Activated CD4-positive, alpha-beta memory T cell treated with anti-CD3 and anti-CD28 coated beads for 36 hours (primary cell): ENCODE measurements at regions of chr10 and their contacts with region 1.

Region 1: GRCh38 chr10:95236068-95236903 is 42.2 kb downstream of the ACSM6 start:
- DNase-seq: peak; percentile 38
- H3K4me3 Mint-ChIP-seq: peak overlapping the region; percentile 16
- H3K27ac Mint-ChIP-seq: peak overlapping the region; percentile 88
- H3K4me1 Mint-ChIP-seq: peaks cover 27% of the 10 kb centered on the region
- H3K27me3 Mint-ChIP-seq: peaks cover 12% of the 10 kb centered on the region

Region 2: GRCh38 chr10:94292434-94293090 is 943.7 kb before region 1 on chr10:
- CTCF ChIA-PET with region 1: no interaction called
- POLR2A ChIA-PET with region 1: no interaction called
- intact Hi-C with region 1: no loop called
- DNase-seq: no peak
- H3K4me3 Mint-ChIP-seq: no peak overlapping the region
- H3K27ac Mint-ChIP-seq: no peak overlapping the region
- H3K4me1 Mint-ChIP-seq: no peaks in the 10 kb centered on the region
- H3K27me3 Mint-ChIP-seq: peaks cover 33% of the 10 kb centered on the region

Region 3: GRCh38 chr10:94591461-94592205 is 644.7 kb before region 1 on chr10:
- CTCF ChIA-PET with region 1: no interaction called
- POLR2A ChIA-PET with region 1: no interaction called
- intact Hi-C with region 1: loop called (anchors 1 kb)
- DNase-seq: no peak
- H3K4me3 Mint-ChIP-seq: no peak overlapping the region
- H3K27ac Mint-ChIP-seq: peak overlapping the region; percentile 84
- H3K4me1 Mint-ChIP-seq: peaks cover 23% of the 10 kb centered on the region
- H3K27me3 Mint-ChIP-seq: no peaks in the 10 kb centered on the region

Region 4: GRCh38 chr10:94607111-94607510 is 629.2 kb before region 1 on chr10:
- CTCF ChIA-PET with region 1: no interaction called
- POLR2A ChIA-PET with region 1: no interaction called
- intact Hi-C with region 1: loop called (anchors 5 kb)
- DNase-seq: no peak
- H3K4me3 Mint-ChIP-seq: no peak overlapping the region
- H3K27ac Mint-ChIP-seq: peak overlapping the region; percentile 72
- H3K4me1 Mint-ChIP-seq: peaks cover 23% of the 10 kb centered on the region
- H3K27me3 Mint-ChIP-seq: no peaks in the 10 kb centered on the region

Region 5: GRCh38 chr10:95183271-95184230 is 52.7 kb before region 1 on chr10:
- CTCF ChIA-PET with region 1: interaction called, 11 read pairs
- POLR2A ChIA-PET with region 1: interaction called, 3 read pairs
- intact Hi-C with region 1: no loop called
- DNase-seq: peak; percentile 82
- H3K4me3 Mint-ChIP-seq: peak overlapping the region; percentile 63
- H3K27ac Mint-ChIP-seq: no peak overlapping the region
- H3K4me1 Mint-ChIP-seq: peaks cover 6% of the 10 kb centered on the region
- H3K27me3 Mint-ChIP-seq: peaks cover 25% of the 10 kb centered on the region

Region 6: DNA sequence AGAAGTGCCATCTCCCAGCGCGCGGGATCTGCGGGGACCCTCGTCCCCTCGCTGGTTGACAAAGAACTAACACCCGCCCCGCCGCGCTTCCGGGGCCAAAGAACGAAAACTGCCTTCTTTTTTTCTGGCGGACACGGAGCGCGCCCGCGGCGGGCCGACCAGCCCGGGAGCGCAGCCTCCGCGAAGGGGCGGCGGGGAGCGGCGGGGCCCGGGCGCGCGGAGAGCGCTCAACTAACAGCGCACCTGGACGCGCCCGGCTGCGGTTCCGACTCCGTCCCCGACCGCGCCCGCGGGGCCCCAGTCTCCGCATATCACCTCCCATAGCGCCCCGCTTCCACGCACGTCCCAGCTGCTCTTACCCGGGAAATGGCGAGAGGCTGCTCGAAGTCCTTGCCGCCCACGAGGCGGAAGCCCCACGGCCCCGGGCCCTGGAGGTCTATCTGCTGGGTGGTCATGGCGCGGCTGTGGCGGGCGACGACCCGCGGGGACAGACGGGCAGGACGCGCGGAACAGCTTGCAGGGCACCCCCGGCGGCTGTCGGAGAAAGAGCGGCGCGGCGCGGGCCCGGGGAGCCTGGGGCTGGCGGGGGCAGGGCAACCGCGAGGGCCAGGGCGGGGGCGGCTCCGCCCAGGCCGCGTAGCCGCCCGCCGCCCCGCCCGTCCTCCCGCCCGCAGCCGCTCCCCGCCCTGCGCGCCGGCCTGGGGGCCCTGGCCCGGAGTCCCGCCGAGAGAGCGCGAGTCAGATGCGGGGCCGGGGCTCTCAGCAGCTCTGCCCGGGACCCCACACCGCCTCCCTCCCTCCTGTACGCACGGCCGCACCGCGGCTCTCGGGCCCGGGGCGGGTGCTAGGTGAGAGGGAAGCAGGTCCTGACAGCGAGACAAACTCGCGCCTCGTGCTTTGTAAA is 54.4 kb after region 1 on chr10 and contains the start of gene PDLIM1:
- CTCF ChIA-PET with region 1: no interaction called
- POLR2A ChIA-PET with region 1: no interaction called
- intact Hi-C with region 1: loop called (anchors 5 kb)
- DNase-seq: peak; percentile 42
- H3K4me3 Mint-ChIP-seq: peak within 1 kb of the TSS; percentile 51
- H3K27ac Mint-ChIP-seq: no peak within 1 kb of the TSS
- H3K4me1 Mint-ChIP-seq: peaks cover 14% of the 10 kb centered on the region
- H3K27me3 Mint-ChIP-seq: peaks cover 44% of the 10 kb centered on the region
- total RNA-seq, gene PDLIM1: 0.76 to 0.92 TPM

Region 7: GRCh38 chr10:95384011-95384704 is 147.9 kb after region 1 on chr10:
- CTCF ChIA-PET with region 1: no interaction called
- POLR2A ChIA-PET with region 1: no interaction called
- intact Hi-C with region 1: loop called (anchors 1 kb)
- DNase-seq: peak; percentile 67
- H3K4me3 Mint-ChIP-seq: no peak overlapping the region
- H3K27ac Mint-ChIP-seq: no peak overlapping the region
- H3K4me1 Mint-ChIP-seq: peaks cover 7% of the 10 kb centered on the region
- H3K27me3 Mint-ChIP-seq: peaks cover 2% of the 10 kb centered on the region

Region 8: DNA sequence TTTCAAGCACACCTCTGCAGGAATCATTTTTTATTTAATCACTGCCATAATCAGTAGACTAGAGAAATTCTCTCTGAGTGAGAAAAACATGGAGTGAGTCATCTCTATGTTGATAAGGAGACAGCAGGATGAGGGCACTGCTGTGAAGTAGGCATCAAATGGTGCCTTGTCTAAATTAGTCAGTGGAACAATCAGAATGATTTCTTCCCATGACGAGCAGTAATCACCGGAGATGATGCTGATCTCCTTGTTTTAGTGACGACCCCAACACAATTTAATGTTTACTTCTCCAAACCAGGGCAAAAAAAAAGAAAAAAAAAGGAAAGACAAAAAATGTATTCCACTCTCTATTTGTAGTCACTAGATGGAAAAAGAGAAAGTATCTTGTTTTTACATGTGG is 249.2 kb after region 1 on chr10:
- CTCF ChIA-PET with region 1: no interaction called
- POLR2A ChIA-PET with region 1: no interaction called
- intact Hi-C with region 1: loop called (anchors 1 kb)
- DNase-seq: peak; percentile 17
- H3K4me3 Mint-ChIP-seq: no peak overlapping the region
- H3K27ac Mint-ChIP-seq: peak overlapping the region; percentile 75
- H3K4me1 Mint-ChIP-seq: peaks cover 17% of the 10 kb centered on the region
- H3K27me3 Mint-ChIP-seq: no peaks in the 10 kb centered on the region